ENCODE measurements at regions of chr1 and their contacts with region 1.

Region 1: GRCh38 chr1:51296383-51297357 is 33.7 kb downstream of the TTC39A start:
- DNase-seq: peak; percentile 25 to 82 (median 53)
- ATAC-seq: peak; percentile 86
- H3K4me3 ChIP-seq: peak overlapping the region; percentile 59
- H3K4me3 Mint-ChIP-seq: peak overlapping the region; percentile 30 to 82 (median 70)
- H3K27ac ChIP-seq: no peak overlapping the region
- H3K27ac Mint-ChIP-seq: peak overlapping the region in 2 of 9 donors; percentile 63 to 72
- H3K4me1 ChIP-seq: no peaks in the 10 kb centered on the region
- H3K4me1 Mint-ChIP-seq: peaks cover 0 to 28% (median 9%) of the 10 kb centered on the region in 7 donors
- H3K27me3 ChIP-seq: no peaks in the 10 kb centered on the region
- H3K27me3 Mint-ChIP-seq: no peaks in the 10 kb centered on the region

Region 2: DNA sequence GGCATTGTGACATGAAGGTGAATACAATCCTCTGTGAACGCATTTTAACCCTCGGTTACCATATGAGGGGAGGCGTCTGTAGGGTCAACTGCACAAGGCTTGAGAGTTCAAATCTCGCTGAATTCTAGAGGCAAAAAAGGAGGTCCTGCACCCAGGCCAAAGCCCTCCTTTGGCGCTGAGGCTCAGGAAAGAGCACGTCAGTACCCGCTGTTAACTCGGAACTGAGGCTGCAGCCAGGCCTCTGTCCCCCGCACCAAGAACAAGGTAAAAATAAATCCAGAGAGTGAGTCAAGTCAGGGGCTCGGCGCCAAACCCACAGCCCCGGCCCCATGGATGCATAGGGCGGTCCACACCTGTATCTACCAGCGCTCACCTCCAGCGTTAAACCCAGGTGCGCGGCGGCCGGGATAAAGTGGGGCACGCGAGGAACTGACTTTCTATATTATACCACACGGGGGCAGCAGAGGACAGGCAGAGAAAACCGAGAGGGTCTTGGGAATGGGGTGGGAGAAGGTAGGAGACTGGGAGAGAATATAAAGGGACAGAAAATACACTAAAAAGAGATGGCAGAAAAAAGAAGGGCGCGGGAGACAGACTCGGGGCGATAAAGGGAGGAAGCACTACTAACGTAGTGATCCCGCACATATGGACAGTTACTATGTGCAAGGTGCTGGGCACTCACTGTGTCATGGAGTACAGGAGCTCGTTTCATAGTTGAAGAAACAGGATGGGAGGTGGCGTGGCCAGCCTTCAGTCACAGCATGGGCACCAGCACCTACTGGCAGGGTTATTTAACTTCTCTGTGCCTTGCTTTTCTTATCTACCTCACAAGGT is 928.3 kb before region 1 on chr1:
- CTCF ChIA-PET with region 1: no interaction called
- POLR2A ChIA-PET with region 1: no interaction called
- intact Hi-C with region 1: loop called in 1 of 2 experiments (anchors 10 kb)
- DNase-seq: peak in 3 of 9 donors; percentile 5 to 49 (median 8)
- ATAC-seq: no peak
- H3K4me3 ChIP-seq: no peak overlapping the region
- H3K4me3 Mint-ChIP-seq: no peak overlapping the region
- H3K27ac ChIP-seq: no peak overlapping the region
- H3K27ac Mint-ChIP-seq: no peak overlapping the region
- H3K4me1 ChIP-seq: no peaks in the 10 kb centered on the region
- H3K4me1 Mint-ChIP-seq: peaks cover 0 to 5% (median 0%) of the 10 kb centered on the region in 7 donors
- H3K27me3 ChIP-seq: peaks cover 0 to 2% of the 10 kb centered on the region in 2 donors
- H3K27me3 Mint-ChIP-seq: peaks cover 40 to 58% (median 53%) of the 10 kb centered on the region in 5 donors

Region 3: DNA sequence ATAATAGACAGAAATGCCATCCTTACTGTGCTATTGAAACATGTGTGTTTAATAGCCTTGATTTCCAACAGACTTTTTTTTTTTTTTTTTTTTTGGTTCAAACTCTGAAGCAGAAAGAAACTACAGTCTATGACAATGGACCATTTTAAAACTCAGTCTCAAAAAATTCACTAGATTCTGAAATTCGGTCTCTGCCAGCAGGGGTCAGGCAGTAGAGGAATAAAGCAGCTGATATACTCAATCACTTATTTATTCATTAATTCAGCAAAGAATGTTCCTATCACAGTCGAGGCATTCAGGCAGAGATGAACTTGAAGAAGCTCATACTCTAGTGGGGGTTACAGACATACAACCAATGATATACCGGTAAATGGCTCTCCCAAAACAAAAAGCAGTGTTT is 612.5 kb before region 1 on chr1:
- CTCF ChIA-PET with region 1: no interaction called
- POLR2A ChIA-PET with region 1: no interaction called
- intact Hi-C with region 1: no loop called
- DNase-seq: no peak
- ATAC-seq: no peak
- H3K4me3 ChIP-seq: no peak overlapping the region
- H3K4me3 Mint-ChIP-seq: no peak overlapping the region
- H3K27ac ChIP-seq: no peak overlapping the region
- H3K27ac Mint-ChIP-seq: no peak overlapping the region
- H3K4me1 ChIP-seq: no peaks in the 10 kb centered on the region
- H3K4me1 Mint-ChIP-seq: peaks cover 0 to 4% (median 0%) of the 10 kb centered on the region in 7 donors
- H3K27me3 ChIP-seq: no peaks in the 10 kb centered on the region
- H3K27me3 Mint-ChIP-seq: no peaks in the 10 kb centered on the region

Region 4: DNA sequence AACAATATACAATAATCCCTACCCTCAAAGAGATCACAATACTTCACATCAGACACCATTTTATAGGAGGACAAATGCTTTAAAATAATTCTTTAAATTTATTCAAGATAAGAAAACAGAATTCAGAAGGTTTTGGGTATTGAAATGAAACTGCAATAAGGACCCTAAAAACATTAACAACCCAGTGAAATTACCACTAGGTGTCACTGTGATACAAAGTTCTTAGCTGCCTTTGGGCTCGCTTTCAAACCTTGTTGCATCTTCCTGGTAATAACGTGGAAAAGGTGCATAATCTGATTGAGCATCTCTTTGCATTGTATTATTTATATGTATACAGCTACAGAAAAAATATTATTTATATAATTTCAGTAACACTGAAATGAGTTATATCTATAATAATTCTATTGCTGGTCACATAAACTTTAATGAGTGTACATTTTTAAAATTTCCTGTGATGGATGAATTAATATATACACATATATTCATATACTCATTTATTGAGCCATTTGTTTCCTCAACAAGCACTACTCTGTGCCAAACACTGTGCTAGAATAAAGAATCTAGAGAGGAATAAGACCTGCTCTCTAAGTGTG is 521.8 kb before region 1 on chr1:
- CTCF ChIA-PET with region 1: no interaction called
- POLR2A ChIA-PET with region 1: no interaction called
- intact Hi-C with region 1: loop called (anchors 1 to 2 kb)
- DNase-seq: peak in 7 of 9 donors; percentile 7 to 53 (median 36)
- ATAC-seq: peak; percentile 54
- H3K4me3 ChIP-seq: no peak overlapping the region
- H3K4me3 Mint-ChIP-seq: no peak overlapping the region
- H3K27ac ChIP-seq: no peak overlapping the region
- H3K27ac Mint-ChIP-seq: no peak overlapping the region
- H3K4me1 ChIP-seq: no peaks in the 10 kb centered on the region
- H3K4me1 Mint-ChIP-seq: peaks cover 4 to 22% (median 13%) of the 10 kb centered on the region in 7 donors
- H3K27me3 ChIP-seq: no peaks in the 10 kb centered on the region
- H3K27me3 Mint-ChIP-seq: no peaks in the 10 kb centered on the region

Region 5: GRCh38 chr1:50873458-50874187 is 423.0 kb before region 1 on chr1:
- CTCF ChIA-PET with region 1: no interaction called
- POLR2A ChIA-PET with region 1: no interaction called
- intact Hi-C with region 1: loop called in 1 of 2 experiments (anchors 1 kb)
- DNase-seq: peak in 8 of 9 donors; percentile 7 to 45 (median 23)
- ATAC-seq: peak; percentile 84
- H3K4me3 ChIP-seq: peak overlapping the region; percentile 25
- H3K4me3 Mint-ChIP-seq: peak overlapping the region in 1 of 10 donors; percentile 54
- H3K27ac ChIP-seq: no peak overlapping the region
- H3K27ac Mint-ChIP-seq: no peak overlapping the region
- H3K4me1 ChIP-seq: no peaks in the 10 kb centered on the region
- H3K4me1 Mint-ChIP-seq: peaks cover 8 to 28% (median 14%) of the 10 kb centered on the region in 7 donors
- H3K27me3 ChIP-seq: no peaks in the 10 kb centered on the region
- H3K27me3 Mint-ChIP-seq: no peaks in the 10 kb centered on the region

Region 6: DNA sequence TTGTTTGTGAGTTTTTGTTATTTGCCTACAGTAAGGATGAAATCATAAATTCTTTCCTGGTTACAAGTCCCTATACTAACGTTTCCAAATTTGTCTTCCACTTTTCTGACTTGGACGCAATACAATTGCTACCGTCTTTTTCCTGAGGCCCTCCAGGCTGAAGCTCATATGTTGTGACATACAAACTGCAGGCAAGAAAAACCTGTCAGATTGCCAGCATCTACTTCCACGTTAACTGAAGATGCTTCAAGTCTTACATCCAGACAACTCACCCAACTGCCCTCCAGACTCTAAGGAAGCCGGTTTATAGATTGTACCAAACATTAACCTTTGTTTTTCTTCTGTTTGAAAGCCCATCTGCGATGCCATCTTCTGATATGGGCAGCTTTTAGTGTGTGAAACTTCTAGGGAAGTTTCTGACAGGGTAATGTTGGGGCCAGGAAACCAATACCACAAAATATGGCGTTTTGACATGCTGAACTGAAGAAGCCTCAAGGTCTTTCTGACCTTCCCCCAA is 82.0 kb before region 1 on chr1:
- CTCF ChIA-PET with region 1: no interaction called
- POLR2A ChIA-PET with region 1: no interaction called
- intact Hi-C with region 1: loop called in 1 of 2 experiments (anchors 2 kb)
- DNase-seq: peak in 2 of 9 donors; percentile 11 to 13
- ATAC-seq: peak; percentile 77
- H3K4me3 ChIP-seq: no peak overlapping the region
- H3K4me3 Mint-ChIP-seq: peak overlapping the region in 7 of 10 donors; percentile 4 to 52 (median 35)
- H3K27ac ChIP-seq: peak overlapping the region; percentile 48
- H3K27ac Mint-ChIP-seq: peak overlapping the region; percentile 6 to 78 (median 66)
- H3K4me1 ChIP-seq: peaks cover 0 to 8% of the 10 kb centered on the region in 2 donors
- H3K4me1 Mint-ChIP-seq: peaks cover 18 to 23% (median 20%) of the 10 kb centered on the region in 7 donors
- H3K27me3 ChIP-seq: no peaks in the 10 kb centered on the region
- H3K27me3 Mint-ChIP-seq: no peaks in the 10 kb centered on the region

Region 7: GRCh38 chr1:51535006-51535592 is 238.4 kb after region 1 on chr1:
- CTCF ChIA-PET with region 1: no interaction called
- POLR2A ChIA-PET with region 1: no interaction called
- intact Hi-C with region 1: loop called in 1 of 2 experiments (anchors 5 kb)
- DNase-seq: peak in 6 of 9 donors; percentile 11 to 34 (median 25)
- ATAC-seq: peak; percentile 60
- H3K4me3 ChIP-seq: no peak overlapping the region
- H3K4me3 Mint-ChIP-seq: no peak overlapping the region
- H3K27ac ChIP-seq: no peak overlapping the region
- H3K27ac Mint-ChIP-seq: peak overlapping the region in 5 of 9 donors; percentile 8 to 84 (median 25)
- H3K4me1 ChIP-seq: peaks cover 0 to 8% of the 10 kb centered on the region in 2 donors
- H3K4me1 Mint-ChIP-seq: peaks cover 0 to 10% (median 2%) of the 10 kb centered on the region in 7 donors
- H3K27me3 ChIP-seq: no peaks in the 10 kb centered on the region
- H3K27me3 Mint-ChIP-seq: no peaks in the 10 kb centered on the region

Measured in naive thymus-derived CD4-positive, alpha-beta T cell (primary cell).